H1 (cell line): ENCODE measurements at regions of chr19 and their contacts with region 1.

Region 1: GRCh38 chr19:45200568-45200994 is 22.0 kb downstream of the BLOC1S3 start:
- DNase-seq: peak in 1 of 2 experiments; percentile 69
- H3K4me3 ChIP-seq: no peak overlapping the region
- H3K27ac ChIP-seq: no peak overlapping the region
- H3K4me1 ChIP-seq: no peaks in the 10 kb centered on the region
- H3K27me3 ChIP-seq: no peaks in the 10 kb centered on the region
- CTCF ChIP-seq: peak; percentile 28 to 77 (median 76)
- EP300 ChIP-seq: no peak
- POLR2A ChIP-seq: no peak
- RAD21 ChIP-seq: peak; percentile 92 to 94

Region 2: DNA sequence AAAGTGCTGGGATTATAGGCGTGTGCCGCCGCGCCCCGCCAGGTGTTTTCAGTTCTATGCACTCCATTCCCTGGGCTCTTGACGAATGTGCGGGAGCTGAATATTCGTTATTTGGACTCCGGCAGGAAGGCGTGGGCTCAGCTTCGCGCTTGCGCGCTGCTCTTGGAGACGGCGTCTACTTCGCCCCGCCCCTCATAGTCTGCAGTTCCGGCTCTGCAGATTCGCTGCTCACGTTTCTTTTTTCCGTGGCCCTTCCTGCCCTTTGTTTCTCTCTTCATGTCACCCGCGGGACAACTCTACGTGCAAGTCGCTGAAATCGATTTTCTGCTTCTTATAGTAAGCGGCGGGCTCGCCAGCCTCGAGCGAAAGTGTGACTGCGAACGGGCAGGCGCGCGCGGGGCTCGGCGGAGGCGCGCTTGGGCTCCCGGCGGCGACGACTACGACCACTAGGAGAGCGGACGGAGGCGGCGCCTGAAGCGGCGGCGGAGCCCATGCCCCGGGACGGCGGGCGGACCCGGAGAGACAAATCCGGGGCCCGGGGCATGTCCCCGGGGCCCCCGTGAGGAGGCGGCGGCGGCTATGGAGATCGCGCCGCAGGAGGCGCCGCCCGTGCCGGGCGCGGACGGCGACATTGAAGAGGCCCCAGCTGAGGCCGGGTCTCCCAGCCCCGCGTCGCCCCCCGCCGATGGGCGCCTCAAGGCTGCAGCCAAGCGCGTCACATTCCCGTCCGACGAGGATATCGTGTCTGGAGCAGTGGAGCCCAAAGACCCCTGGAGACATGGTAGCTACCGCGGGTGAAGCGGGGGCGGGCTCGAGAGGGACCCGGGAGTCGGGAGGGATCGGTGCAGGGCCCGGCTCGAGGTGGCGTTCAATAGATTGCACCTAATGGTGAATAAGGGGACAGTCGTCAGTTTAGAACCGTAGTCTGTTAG is 107.6 kb before region 1 on chr19 and contains the start of gene PPP1R37:
- CTCF ChIA-PET with region 1: no interaction called
- POLR2A ChIA-PET with region 1: no interaction called
- DNase-seq: peak; percentile 89 to 90
- H3K4me3 ChIP-seq: peak within 1 kb of the TSS; percentile 73 to 97 (median 86)
- H3K27ac ChIP-seq: peak within 1 kb of the TSS; percentile 98
- H3K4me1 ChIP-seq: peaks cover 6 to 25% (median 12%) of the 10 kb centered on the region in 4 experiments
- H3K27me3 ChIP-seq: no peaks in the 10 kb centered on the region
- CTCF ChIP-seq: peak in 2 of 3 experiments; percentile 5 to 20; a peak in 2 of 4 replicates
- EP300 ChIP-seq: peak; percentile 3 to 94; a peak in 2 of 3 replicates
- POLR2A ChIP-seq: no peak; a peak in 1 of 3 replicates
- RAD21 ChIP-seq: no peak
- total RNA-seq, gene PPP1R37: 25.7 and 27.0 TPM in 2 replicates

Region 3: DNA sequence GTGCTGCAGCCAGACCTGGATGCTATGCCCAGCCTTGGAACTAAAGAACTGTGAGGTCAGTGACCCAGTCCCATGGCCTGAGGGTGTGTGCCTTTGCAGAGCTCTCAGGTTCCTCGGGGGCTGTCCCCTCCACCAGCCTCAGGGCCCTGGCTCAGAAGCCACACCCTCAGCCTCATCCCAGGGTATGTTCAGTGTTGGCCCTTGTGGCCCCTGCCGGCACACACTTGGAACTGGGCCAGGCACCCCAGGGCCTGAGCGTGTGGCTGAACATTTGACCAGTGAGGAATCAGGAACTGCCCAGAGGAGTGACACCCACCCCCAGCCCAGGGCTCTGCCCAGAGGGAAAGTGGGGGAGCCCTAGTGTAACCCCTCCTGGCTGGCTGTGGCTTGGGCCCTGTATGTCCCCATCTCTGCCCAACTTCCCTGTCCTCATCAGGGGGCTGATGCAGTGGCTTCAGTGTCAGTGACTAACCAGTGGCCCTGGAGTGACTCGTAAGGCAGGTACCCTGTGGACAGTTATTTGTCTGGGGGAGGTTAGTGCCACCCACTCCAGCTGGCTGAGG is 49.8 kb before region 1 on chr19:
- CTCF ChIA-PET with region 1: no interaction called
- POLR2A ChIA-PET with region 1: no interaction called
- DNase-seq: no peak
- H3K4me3 ChIP-seq: no peak overlapping the region
- H3K27ac ChIP-seq: no peak overlapping the region
- H3K4me1 ChIP-seq: peaks cover 0 to 13% (median 3%) of the 10 kb centered on the region in 4 experiments; a peak in 6 of 7 replicates
- H3K27me3 ChIP-seq: peaks cover 16 to 44% (median 36%) of the 10 kb centered on the region in 4 experiments
- CTCF ChIP-seq: no peak
- EP300 ChIP-seq: no peak
- POLR2A ChIP-seq: no peak
- RAD21 ChIP-seq: no peak

Region 4: GRCh38 chr19:45187421-45188100 is 13.0 kb before region 1 on chr19:
- CTCF ChIA-PET with region 1: interaction called, 15 read pairs
- POLR2A ChIA-PET with region 1: no interaction called
- DNase-seq: peak in 1 of 2 experiments; percentile 61
- H3K4me3 ChIP-seq: no peak overlapping the region
- H3K27ac ChIP-seq: no peak overlapping the region
- H3K4me1 ChIP-seq: peaks cover 0 to 3% (median 2%) of the 10 kb centered on the region in 4 experiments; a peak in 3 of 7 replicates
- H3K27me3 ChIP-seq: no peaks in the 10 kb centered on the region; a peak in 1 of 7 replicates
- CTCF ChIP-seq: peak in 2 of 3 experiments; percentile 71 to 74; a peak in 3 of 4 replicates
- EP300 ChIP-seq: no peak
- POLR2A ChIP-seq: no peak
- RAD21 ChIP-seq: peak; percentile 65 to 75

Region 5: GRCh38 chr19:45215383-45216191 is 15.0 kb after region 1 on chr19:
- CTCF ChIA-PET with region 1: interaction called, 29 read pairs
- POLR2A ChIA-PET with region 1: interaction called, 4 read pairs
- DNase-seq: peak in 1 of 2 experiments; percentile 72
- H3K4me3 ChIP-seq: peak overlapping the region; percentile 15 to 63 (median 40); a peak in 7 of 8 replicates
- H3K27ac ChIP-seq: no peak overlapping the region
- H3K4me1 ChIP-seq: peaks cover 0 to 16% (median 10%) of the 10 kb centered on the region in 4 experiments; a peak in 5 of 7 replicates
- H3K27me3 ChIP-seq: peaks cover 14 to 44% (median 36%) of the 10 kb centered on the region in 4 experiments
- CTCF ChIP-seq: no peak
- EP300 ChIP-seq: no peak
- POLR2A ChIP-seq: no peak
- RAD21 ChIP-seq: no peak

Region 6: GRCh38 chr19:45234089-45234869 is 33.7 kb after region 1 on chr19:
- CTCF ChIA-PET with region 1: interaction called, 11 read pairs
- POLR2A ChIA-PET with region 1: no interaction called
- DNase-seq: peak in 1 of 2 experiments; percentile 77
- H3K4me3 ChIP-seq: peak overlapping the region; percentile 12 to 58 (median 26)
- H3K27ac ChIP-seq: no peak overlapping the region
- H3K4me1 ChIP-seq: peaks cover 0 to 8% (median 5%) of the 10 kb centered on the region in 4 experiments; a peak in 4 of 7 replicates
- H3K27me3 ChIP-seq: peaks cover 26 to 48% (median 44%) of the 10 kb centered on the region in 4 experiments
- CTCF ChIP-seq: no peak
- EP300 ChIP-seq: no peak
- POLR2A ChIP-seq: no peak
- RAD21 ChIP-seq: no peak

Region 7: GRCh38 chr19:45250832-45251451 is 50.4 kb after region 1 on chr19 and contains the start of gene MARK4:
- CTCF ChIA-PET with region 1: interaction called, 106 read pairs
- POLR2A ChIA-PET with region 1: interaction called, 4 read pairs
- DNase-seq: peak in 1 of 2 experiments; percentile 83
- H3K4me3 ChIP-seq: peak within 1 kb of the TSS; percentile 60 to 86 (median 66)
- H3K27ac ChIP-seq: no peak within 1 kb of the TSS
- H3K4me1 ChIP-seq: peaks cover 0 to 10% (median 0%) of the 10 kb centered on the region in 4 experiments; a peak in 2 of 7 replicates
- H3K27me3 ChIP-seq: peaks cover 0 to 10% (median 9%) of the 10 kb centered on the region in 4 experiments; a peak in 5 of 7 replicates
- CTCF ChIP-seq: no peak
- EP300 ChIP-seq: no peak
- POLR2A ChIP-seq: no peak
- RAD21 ChIP-seq: no peak
- total RNA-seq, gene MARK4: 46.8 and 49.8 TPM in 2 replicates

Region 8: DNA sequence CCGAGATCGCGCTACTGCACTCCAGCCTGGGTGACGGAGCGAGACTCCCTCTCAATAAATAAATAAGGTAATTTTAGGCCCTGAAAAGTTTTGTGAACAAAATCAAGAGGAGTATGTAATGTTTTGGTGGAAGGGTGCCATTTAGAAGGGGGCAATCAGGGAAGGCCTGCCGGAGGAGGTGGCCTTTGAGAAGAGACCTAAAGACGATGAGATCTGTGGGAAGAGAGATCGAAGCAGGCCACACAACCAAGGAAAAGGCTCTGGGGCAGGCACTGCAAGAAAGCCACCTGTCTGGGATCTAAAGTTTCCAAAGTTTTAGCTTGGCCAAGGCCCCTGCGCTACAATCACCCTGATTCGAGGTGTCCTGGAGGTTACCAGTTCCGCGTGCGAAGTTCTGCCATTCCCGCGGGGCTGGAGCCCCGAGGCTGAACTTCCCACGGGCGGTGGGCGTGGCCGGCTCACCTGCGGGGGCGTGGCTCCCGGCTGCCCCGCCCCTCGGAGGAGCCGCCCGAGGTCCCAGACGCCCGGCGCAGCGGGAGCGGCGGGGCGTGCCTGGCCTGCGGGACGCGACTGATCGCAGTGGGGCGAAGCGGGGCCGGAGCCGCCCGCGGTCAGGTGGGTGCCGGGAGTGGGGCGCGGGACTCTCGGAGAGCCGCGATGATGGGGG is 139.8 kb after region 1 on chr19 and contains the start of gene KLC3:
- CTCF ChIA-PET with region 1: interaction called, 60 read pairs
- POLR2A ChIA-PET with region 1: no interaction called
- DNase-seq: peak in 1 of 2 experiments; percentile 90
- H3K4me3 ChIP-seq: peak within 1 kb of the TSS; percentile 28 to 70 (median 36)
- H3K27ac ChIP-seq: no peak within 1 kb of the TSS
- H3K4me1 ChIP-seq: peaks cover 0 to 3% (median 0%) of the 10 kb centered on the region in 4 experiments; a peak in 4 of 7 replicates
- H3K27me3 ChIP-seq: peaks cover 4 to 16% (median 13%) of the 10 kb centered on the region in 4 experiments; a peak in 6 of 7 replicates
- CTCF ChIP-seq: no peak
- EP300 ChIP-seq: no peak
- POLR2A ChIP-seq: no peak
- RAD21 ChIP-seq: no peak
- total RNA-seq, gene KLC3: 2.8 and 3.2 TPM in 2 replicates

Region 9: DNA sequence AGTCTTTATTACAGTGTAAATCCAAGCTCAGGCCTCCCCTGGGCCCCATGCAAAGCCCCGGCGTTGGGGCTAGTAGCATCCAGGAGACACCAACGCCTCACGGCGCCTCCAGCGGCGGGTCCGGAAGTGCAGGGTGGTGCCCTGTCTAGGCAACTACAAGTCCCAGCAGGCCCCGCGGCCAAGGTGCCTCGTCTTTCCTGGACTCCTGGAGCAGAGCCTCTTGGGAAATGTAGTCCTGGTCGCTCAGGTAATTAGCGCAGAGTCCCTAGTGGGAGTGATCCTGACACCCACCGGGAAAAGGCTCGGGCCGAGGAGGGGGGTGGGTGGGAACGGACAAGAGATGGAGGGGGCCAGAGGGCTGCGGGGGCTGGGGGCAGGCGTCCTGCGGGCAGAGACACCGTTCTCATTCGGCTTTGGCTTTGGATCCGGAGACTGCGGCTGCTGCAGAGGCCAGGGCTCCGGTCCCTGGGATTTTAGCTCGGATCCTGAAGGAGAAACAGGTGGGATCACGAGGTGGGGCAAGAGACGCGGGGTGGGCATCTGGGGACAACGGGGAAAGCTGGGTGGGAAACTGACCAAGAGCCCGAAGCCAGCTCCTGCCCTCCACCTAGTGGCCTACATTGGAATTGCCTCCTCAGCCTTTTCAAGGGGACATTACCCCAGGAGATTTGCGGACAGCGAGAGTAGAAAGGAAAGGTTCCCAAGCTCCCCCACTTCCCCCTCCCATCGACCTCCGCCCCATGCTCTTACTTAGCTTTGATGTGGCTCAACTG is 284.9 kb after region 1 on chr19:
- CTCF ChIA-PET with region 1: no interaction called
- POLR2A ChIA-PET with region 1: no interaction called
- DNase-seq: peak in 1 of 2 experiments; percentile 100
- H3K4me3 ChIP-seq: peak overlapping the region; percentile 32 to 69 (median 52)
- H3K27ac ChIP-seq: no peak overlapping the region; the same call in 1 of the 2 replicates
- H3K4me1 ChIP-seq: peaks cover 0 to 3% (median 0%) of the 10 kb centered on the region in 4 experiments; a peak in 1 of 7 replicates
- H3K27me3 ChIP-seq: no peaks in the 10 kb centered on the region
- CTCF ChIP-seq: peak; percentile 86 to 95 (median 92)
- EP300 ChIP-seq: no peak
- POLR2A ChIP-seq: no peak
- RAD21 ChIP-seq: peak; percentile 59 to 66